ENCODE measurements at regions of chr13 and their contacts with region 1.

Region 1: DNA sequence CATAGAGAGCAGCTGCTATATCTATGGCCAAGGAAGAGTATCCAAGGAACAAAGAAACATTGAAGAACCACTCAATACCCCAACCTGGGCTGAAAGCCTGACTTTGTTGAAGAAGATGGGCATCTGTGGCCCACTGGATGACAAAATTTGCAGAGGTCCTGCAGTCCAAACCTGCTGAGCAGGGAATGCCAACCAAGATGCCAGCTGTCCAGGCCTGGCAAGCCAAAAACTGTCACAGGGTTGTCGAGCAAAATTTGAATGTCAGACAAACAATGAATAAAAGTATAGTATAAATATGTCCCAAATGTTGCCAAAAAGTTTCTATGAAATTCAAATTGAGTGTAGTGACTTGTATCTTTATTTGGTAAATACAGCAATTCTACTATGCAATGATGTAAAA is 1040.2 kb downstream of the PCDH9 start:
- DNase-seq: no peak
- ATAC-seq: no peak
- H3K4me3 ChIP-seq: no peak overlapping the region
- H3K27ac ChIP-seq: no peak overlapping the region
- H3K4me1 ChIP-seq: peaks cover 0 to 1% of the 10 kb centered on the region in 2 donors
- H3K27me3 ChIP-seq: no peaks in the 10 kb centered on the region

Region 2: DNA sequence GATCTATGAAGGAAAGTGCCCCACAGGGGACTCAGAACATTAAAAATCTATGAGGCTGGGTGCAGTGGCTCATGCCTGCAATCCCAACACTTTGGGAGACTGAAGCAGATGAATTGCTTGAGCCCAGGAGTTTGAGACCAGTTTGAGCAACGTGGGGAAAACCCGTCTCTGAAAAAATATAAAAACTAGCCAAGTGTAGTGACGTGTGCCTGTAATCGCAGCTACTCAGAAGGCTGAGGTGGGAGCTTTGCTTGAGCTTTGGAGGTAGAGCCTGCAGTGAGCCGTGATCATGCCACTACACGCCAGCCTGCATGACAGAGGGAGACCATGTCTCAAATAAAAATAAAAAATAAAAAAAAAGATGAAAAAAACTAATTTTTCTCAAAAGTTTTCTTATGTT is 30.5 kb before region 1 on chr13:
- intact Hi-C with region 1: loop called in 1 of 2 experiments (anchors 2 kb)
- DNase-seq: no peak
- ATAC-seq: no peak
- H3K4me3 ChIP-seq: no peak overlapping the region
- H3K27ac ChIP-seq: no peak overlapping the region
- H3K4me1 ChIP-seq: no peaks in the 10 kb centered on the region
- H3K27me3 ChIP-seq: no peaks in the 10 kb centered on the region